ENCODE measurements at regions of chr16 and their contacts with region 1.

Region 1: GRCh38 chr16:65671-66137 is 6.7 kb downstream of the RHBDF1 start:
- DNase-seq: peak in 1 of 2 experiments; percentile 98
- H3K4me3 ChIP-seq: no peak overlapping the region
- H3K27ac ChIP-seq: no peak overlapping the region
- H3K4me1 ChIP-seq: peaks cover 0 to 14% (median 4%) of the 10 kb centered on the region in 4 experiments; a peak in 6 of 7 replicates
- H3K27me3 ChIP-seq: no peaks in the 10 kb centered on the region
- CTCF ChIP-seq: peak; percentile 98 to 100 (median 99)
- EP300 ChIP-seq: no peak
- POLR2A ChIP-seq: no peak
- RAD21 ChIP-seq: peak; percentile 99 to 100

Region 2: GRCh38 chr16:9903-10665 is 55.6 kb before region 1 on chr16:
- CTCF ChIA-PET with region 1: no interaction called
- POLR2A ChIA-PET with region 1: no interaction called
- DNase-seq: no peak
- H3K4me3 ChIP-seq: peak overlapping the region in 1 of 4 experiments; percentile 22; a peak in 1 of 8 replicates
- H3K27ac ChIP-seq: no peak overlapping the region
- H3K4me1 ChIP-seq: no peaks in the 10 kb centered on the region
- H3K27me3 ChIP-seq: no peaks in the 10 kb centered on the region
- CTCF ChIP-seq: no peak
- EP300 ChIP-seq: no peak
- POLR2A ChIP-seq: no peak
- RAD21 ChIP-seq: no peak

Region 3: DNA sequence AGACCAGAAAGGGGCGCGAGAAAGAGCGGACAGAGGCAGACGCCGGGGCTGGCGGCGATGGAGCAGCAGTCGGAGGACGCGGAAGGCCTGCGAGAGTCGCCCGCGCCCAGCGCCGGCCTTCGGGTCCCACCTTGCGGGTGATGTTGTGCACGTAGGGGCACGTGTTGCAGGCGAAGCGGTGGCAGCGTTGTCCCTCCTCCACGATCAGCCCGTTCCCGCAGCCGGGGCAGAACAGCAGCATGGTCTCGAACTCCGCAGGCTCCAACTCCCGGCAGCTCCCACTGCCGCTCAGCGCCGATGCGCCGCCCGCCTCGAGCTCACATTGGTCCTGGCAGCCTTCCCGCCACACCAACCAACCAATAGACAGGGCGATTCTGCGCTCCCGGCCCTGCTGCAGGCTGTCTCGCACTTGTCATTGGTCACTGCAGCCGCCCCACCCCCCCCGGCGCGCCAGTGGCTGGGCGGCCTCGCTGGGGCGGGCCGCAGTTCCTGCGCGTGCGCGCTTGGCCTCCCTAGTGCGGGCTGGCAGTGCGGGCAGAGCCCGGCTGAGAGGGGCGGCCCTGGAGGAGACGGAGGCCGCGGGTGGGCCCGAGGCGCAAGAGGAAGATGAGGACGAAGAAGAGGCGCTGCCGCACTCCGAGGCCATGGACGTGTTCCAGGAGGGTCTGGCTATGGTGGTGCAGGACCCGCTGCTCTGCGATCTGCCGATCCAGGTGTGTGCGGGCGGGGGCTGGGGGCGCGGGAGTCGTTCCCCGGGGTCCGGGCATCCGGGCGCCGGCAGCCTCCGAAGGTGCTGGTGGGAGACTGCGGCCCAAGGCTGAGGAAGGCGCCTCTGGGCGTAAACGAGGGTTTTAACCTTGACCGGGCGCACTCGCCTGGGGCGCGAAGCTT is 12.1 kb before region 1 on chr16 and contains the starts of genes POLR3K and SNRNP25:
- CTCF ChIA-PET with region 1: interaction called, 13 read pairs
- POLR2A ChIA-PET with region 1: interaction called, 14 read pairs
- DNase-seq: peak; percentile 92 to 97
- H3K4me3 ChIP-seq: peak within 1 kb of the TSS; percentile 79 to 95 (median 86)
- H3K27ac ChIP-seq: peak within 1 kb of the TSS; percentile 79
- H3K4me1 ChIP-seq: no peaks in the 10 kb centered on the region
- H3K27me3 ChIP-seq: no peaks in the 10 kb centered on the region
- CTCF ChIP-seq: no peak
- EP300 ChIP-seq: no peak
- POLR2A ChIP-seq: peak; percentile 66 to 93
- RAD21 ChIP-seq: no peak
- total RNA-seq, gene POLR3K: 45.4 and 49.6 TPM in 2 replicates
- total RNA-seq, gene SNRNP25: 49.6 and 58.4 TPM in 2 replicates

Region 4: DNA sequence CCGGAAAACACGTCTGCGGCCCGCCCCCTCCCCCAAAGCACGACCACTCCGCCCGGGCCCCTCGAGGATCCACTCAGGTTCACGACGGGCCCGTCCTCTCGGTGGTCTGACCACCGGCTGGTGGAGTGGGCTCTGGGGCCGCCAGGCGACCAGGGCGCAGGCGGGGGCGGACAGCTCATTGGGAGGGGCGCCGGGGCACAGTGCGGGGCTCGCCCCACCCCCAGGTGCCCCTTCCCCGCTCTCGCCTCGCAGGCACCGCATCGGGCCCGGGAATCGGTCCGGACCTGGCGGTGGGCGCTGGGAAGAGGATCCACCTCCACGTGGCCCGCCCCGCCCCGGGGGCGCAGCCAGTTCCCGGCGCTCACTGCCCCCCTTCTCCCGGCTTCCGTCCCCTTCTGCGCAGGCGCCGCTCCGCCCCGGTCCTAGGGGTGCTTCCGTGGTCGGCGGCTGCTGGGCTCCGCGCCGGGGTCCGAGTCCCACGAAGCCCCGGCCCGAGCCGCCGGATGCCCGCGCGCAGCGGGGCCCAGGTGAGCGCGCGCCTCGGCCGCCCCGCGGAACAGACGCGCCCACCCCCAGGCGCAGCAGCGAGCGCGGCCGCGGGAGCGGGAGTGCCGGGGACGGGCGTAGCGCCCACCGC is 12.2 kb after region 1 on chr16 and contains the start of gene MPG:
- CTCF ChIA-PET with region 1: interaction called, 856 read pairs
- POLR2A ChIA-PET with region 1: interaction called, 21 read pairs
- DNase-seq: peak in 1 of 2 experiments; percentile 87
- H3K4me3 ChIP-seq: peak within 1 kb of the TSS; percentile 54 to 78 (median 68)
- H3K27ac ChIP-seq: no peak within 1 kb of the TSS
- H3K4me1 ChIP-seq: peaks cover 6 to 60% (median 41%) of the 10 kb centered on the region in 4 experiments
- H3K27me3 ChIP-seq: peaks cover 0 to 4% (median 3%) of the 10 kb centered on the region in 4 experiments; a peak in 3 of 7 replicates
- CTCF ChIP-seq: no peak
- EP300 ChIP-seq: no peak
- POLR2A ChIP-seq: no peak; a peak in 1 of 3 replicates
- RAD21 ChIP-seq: no peak
- total RNA-seq, gene MPG: 35.8 and 37.6 TPM in 2 replicates

Region 5: GRCh38 chr16:129075-129474 is 63.4 kb after region 1 on chr16:
- CTCF ChIA-PET with region 1: interaction called, 10 read pairs
- POLR2A ChIA-PET with region 1: no interaction called
- DNase-seq: no peak
- H3K4me3 ChIP-seq: no peak overlapping the region
- H3K27ac ChIP-seq: no peak overlapping the region
- H3K4me1 ChIP-seq: no peaks in the 10 kb centered on the region
- H3K27me3 ChIP-seq: no peaks in the 10 kb centered on the region
- CTCF ChIP-seq: no peak
- EP300 ChIP-seq: no peak
- POLR2A ChIP-seq: no peak
- RAD21 ChIP-seq: no peak

Region 6: DNA sequence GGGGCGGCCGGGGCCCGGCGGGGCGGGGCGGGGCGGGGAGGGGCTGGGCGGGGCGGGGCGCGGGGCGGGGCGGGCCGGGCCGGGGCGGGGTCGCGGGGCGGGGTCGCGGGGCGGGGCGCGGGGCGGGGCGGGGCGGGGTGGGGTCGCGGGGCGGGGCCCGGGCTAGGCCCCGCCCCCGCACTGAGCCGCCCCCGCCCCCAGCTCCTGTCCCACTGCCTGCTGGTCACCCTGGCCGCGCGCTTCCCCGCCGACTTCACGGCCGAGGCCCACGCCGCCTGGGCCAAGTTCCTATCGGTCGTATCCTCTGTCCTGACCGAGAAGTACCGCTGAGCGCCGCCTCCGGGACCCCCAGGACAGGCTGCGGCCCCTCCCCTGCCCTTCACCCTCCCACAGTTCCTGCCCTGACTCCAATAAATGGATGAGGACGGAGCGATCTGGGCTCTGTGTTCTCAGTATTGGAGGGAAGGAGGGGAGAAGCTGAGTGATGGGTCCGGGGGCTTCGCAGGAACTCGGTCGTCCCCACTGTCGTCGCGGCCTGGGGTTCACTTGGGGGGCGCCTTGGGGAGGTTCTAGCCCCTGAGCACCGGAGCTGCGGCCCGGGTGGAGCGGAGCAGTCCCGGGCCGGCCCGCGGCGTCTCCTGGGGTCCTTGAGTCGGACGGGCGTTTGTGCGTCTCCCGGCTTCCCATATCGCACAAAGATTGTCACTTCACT is 99.3 kb after region 1 on chr16:
- CTCF ChIA-PET with region 1: interaction called, 16 read pairs
- POLR2A ChIA-PET with region 1: no interaction called
- DNase-seq: peak in 1 of 2 experiments; percentile 82
- H3K4me3 ChIP-seq: peak overlapping the region; percentile 14 to 59 (median 20); a peak in 7 of 8 replicates
- H3K27ac ChIP-seq: no peak overlapping the region
- H3K4me1 ChIP-seq: peaks cover 0 to 18% (median 16%) of the 10 kb centered on the region in 4 experiments; a peak in 6 of 7 replicates
- H3K27me3 ChIP-seq: peaks cover 33 to 58% (median 54%) of the 10 kb centered on the region in 4 experiments
- CTCF ChIP-seq: no peak
- EP300 ChIP-seq: no peak
- POLR2A ChIP-seq: no peak
- RAD21 ChIP-seq: no peak

Region 7: GRCh38 chr16:200388-200787 is 134.7 kb after region 1 on chr16:
- CTCF ChIA-PET with region 1: no interaction called
- POLR2A ChIA-PET with region 1: no interaction called
- DNase-seq: no peak
- H3K4me3 ChIP-seq: no peak overlapping the region
- H3K27ac ChIP-seq: no peak overlapping the region
- H3K4me1 ChIP-seq: no peaks in the 10 kb centered on the region
- H3K27me3 ChIP-seq: no peaks in the 10 kb centered on the region
- CTCF ChIP-seq: no peak
- EP300 ChIP-seq: no peak
- POLR2A ChIP-seq: no peak
- RAD21 ChIP-seq: no peak

Region 8: DNA sequence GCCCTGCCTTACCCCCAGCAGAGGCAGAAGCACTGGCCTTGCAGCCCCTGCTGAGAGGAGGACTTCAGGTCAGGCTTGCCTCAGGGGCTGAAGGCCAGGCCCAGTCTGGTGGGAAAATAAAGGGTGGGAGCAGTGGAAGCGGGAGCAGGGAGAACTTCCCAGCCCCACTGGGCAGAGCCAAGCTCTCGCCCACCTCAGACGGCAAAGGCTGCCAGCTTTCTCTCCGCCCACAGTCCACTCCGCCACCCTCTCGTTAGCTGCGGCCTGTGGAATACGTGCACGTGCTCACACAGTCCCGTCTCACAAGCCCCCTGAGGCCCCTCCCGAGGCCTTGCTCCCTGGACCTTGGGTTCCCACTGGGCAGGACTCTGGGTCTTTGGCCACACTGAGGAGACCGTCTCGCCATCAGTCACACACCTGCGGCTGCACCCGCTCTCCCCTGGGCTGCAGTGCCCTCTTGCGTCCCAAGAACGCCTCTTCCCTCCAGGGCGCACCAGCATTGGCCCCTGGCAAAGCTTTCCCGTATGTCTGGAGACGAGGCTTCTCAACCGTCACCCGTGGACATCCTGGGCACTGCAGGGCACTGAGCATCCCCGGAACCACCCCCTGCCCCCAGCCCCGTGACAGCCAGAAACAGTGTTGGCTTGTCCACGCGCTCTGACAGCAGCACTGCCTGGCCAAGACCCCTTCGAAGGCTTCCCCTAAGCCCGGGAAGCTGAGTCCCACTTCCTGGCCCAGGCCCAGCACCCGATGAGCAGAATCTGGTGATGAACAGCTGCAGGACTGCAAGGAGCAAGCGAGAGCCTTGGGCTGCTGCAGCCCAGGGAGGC is 296.4 kb after region 1 on chr16:
- CTCF ChIA-PET with region 1: interaction called, 12 read pairs
- POLR2A ChIA-PET with region 1: no interaction called
- DNase-seq: peak; percentile 58 to 85
- H3K4me3 ChIP-seq: no peak overlapping the region
- H3K27ac ChIP-seq: no peak overlapping the region
- H3K4me1 ChIP-seq: no peaks in the 10 kb centered on the region; a peak in 2 of 7 replicates
- H3K27me3 ChIP-seq: no peaks in the 10 kb centered on the region
- CTCF ChIP-seq: peak; percentile 91 to 96 (median 92)
- EP300 ChIP-seq: no peak
- POLR2A ChIP-seq: no peak
- RAD21 ChIP-seq: peak; percentile 94 to 96

Measured in H1 (cell line).